ENCODE measurements at regions of chr20 and their contacts with region 1.

Region 1: DNA sequence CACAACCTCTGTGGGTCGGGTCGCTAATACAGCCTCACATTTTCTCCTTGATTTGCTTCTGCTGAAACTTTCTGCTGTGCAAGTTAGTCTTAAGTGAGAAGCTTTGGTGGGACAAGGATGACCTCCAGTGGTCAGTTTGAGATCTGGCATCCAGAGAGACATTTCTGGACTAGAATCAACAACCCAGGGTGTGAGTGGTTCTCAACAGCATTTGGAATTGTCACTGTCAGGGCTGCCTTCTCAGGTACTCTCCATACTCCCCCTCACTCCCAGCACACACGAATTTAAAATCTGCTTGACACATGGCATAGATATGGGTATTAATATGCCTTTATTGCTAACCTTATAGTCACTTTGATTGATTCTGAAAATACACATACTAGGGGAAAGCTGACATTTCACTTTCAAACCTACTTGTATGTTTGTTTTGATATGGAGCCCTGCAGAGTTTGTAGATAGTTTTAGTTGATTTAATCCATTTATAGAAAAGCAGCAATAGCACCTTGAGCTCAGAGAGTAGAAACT is 13.2 kb downstream of the OTOR start:
- DNase-seq: peak; percentile 41 to 59
- H3K4me3 ChIP-seq: no peak overlapping the region
- H3K27ac ChIP-seq: no peak overlapping the region
- H3K4me1 ChIP-seq: peaks cover 0 to 10% (median 2%) of the 10 kb centered on the region in 4 experiments; a peak in 2 of 7 replicates
- H3K27me3 ChIP-seq: no peaks in the 10 kb centered on the region
- CTCF ChIP-seq: peak in 2 of 3 experiments; percentile 83 to 85; a peak in 3 of 4 replicates
- EP300 ChIP-seq: no peak
- POLR2A ChIP-seq: no peak
- RAD21 ChIP-seq: peak; percentile 96 to 98

Region 2: DNA sequence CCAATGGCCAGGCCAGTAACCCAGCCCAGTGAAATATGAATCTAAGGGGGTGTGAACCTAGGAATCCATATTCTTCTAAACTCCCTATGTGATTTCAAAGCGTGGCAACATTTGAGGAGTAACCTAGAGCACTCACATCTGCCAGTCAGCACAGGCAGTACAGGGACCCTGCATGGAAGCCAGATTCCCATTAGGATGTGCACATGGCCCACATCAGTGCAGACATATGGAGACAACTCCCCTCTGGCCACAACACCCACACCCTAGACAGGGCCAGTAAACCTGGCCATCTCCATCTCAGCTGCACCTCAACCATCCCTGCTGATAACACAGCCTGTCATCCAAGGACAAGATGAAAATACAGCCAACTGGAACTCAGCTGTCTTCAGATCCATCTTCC is 244.6 kb before region 1 on chr20:
- CTCF ChIA-PET with region 1: interaction called, 11 read pairs
- POLR2A ChIA-PET with region 1: no interaction called
- DNase-seq: no peak
- H3K4me3 ChIP-seq: no peak overlapping the region
- H3K27ac ChIP-seq: no peak overlapping the region
- H3K4me1 ChIP-seq: peaks cover 0 to 4% (median 2%) of the 10 kb centered on the region in 4 experiments; a peak in 4 of 7 replicates
- H3K27me3 ChIP-seq: no peaks in the 10 kb centered on the region
- CTCF ChIP-seq: no peak
- EP300 ChIP-seq: no peak
- POLR2A ChIP-seq: no peak
- RAD21 ChIP-seq: no peak

Region 3: DNA sequence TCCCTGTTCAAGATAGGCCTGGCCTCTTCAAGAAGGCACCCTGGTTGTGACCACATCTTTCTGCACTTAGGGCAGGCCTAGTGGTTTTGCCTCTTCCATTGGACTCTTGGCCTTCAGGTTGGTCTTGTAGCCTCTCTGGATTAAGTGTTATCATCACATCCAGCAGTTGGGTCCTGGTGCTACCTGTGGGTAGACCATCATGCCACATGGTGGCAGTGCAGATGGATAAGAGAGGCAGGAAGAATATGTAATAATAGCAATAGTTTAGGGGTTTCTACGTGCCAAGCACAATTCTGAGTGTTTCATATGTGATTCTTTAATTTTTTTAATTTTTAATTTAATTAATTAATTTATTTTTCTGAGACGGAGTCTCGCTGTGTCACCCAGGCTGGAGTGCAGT is 60.1 kb before region 1 on chr20:
- CTCF ChIA-PET with region 1: interaction called, 22 read pairs
- POLR2A ChIA-PET with region 1: no interaction called
- DNase-seq: no peak
- H3K4me3 ChIP-seq: no peak overlapping the region
- H3K27ac ChIP-seq: no peak overlapping the region
- H3K4me1 ChIP-seq: no peaks in the 10 kb centered on the region
- H3K27me3 ChIP-seq: no peaks in the 10 kb centered on the region
- CTCF ChIP-seq: peak; percentile 49 to 69 (median 55)
- EP300 ChIP-seq: no peak
- POLR2A ChIP-seq: no peak
- RAD21 ChIP-seq: peak; percentile 49 to 67

Region 4: DNA sequence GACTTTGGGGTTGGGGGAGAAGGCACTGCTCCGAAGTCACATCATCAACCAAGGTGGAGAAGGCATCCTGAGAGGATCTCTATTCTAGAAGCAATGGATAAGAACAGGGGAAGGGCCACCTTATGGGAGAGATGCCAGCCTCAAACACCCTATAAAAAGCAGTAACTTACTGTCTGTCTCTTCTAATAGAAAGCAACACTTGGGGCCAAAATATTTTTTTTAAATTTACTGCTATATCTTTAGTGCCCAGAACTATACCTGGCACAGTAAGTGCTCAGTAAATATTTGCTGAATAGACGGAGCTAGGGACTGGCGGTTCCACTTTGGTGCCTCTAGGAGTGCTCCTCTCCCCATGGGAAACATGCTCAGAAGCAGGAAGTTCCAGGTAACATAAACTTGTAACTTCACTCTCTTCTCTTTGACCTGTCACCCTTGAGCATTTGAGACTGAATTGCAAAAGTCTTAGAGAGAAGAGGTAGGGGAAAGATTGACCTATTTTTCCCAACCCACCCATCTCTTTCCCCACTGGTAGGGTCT is 14.0 kb before region 1 on chr20:
- CTCF ChIA-PET with region 1: interaction called, 42 read pairs
- POLR2A ChIA-PET with region 1: no interaction called
- DNase-seq: no peak
- H3K4me3 ChIP-seq: no peak overlapping the region
- H3K27ac ChIP-seq: no peak overlapping the region
- H3K4me1 ChIP-seq: peaks cover 0 to under 1% (median under 1%) of the 10 kb centered on the region in 4 experiments; a peak in 2 of 7 replicates
- H3K27me3 ChIP-seq: no peaks in the 10 kb centered on the region
- CTCF ChIP-seq: peak in 2 of 3 experiments; percentile 23 to 50; a peak in 2 of 4 replicates
- EP300 ChIP-seq: no peak
- POLR2A ChIP-seq: no peak
- RAD21 ChIP-seq: peak in 1 of 2 experiments; percentile 17; a peak in 1 of 4 replicates